ENCODE measurements at regions of chr12 and their contacts with region 1.

Region 1: GRCh38 chr12:18250313-18250916 is 10.9 kb upstream of the PIK3C2G start:
- DNase-seq: peak; percentile 79
- H3K4me3 ChIP-seq: no peak overlapping the region
- H3K27ac ChIP-seq: no peak overlapping the region
- H3K4me1 ChIP-seq: peaks cover 2% of the 10 kb centered on the region
- H3K27me3 ChIP-seq: no peaks in the 10 kb centered on the region
- CTCF ChIP-seq: peak; percentile 79

Region 2: GRCh38 chr12:18320036-18320617 is 69.7 kb after region 1 on chr12:
- CTCF ChIA-PET with region 1: no interaction called
- POLR2A ChIA-PET with region 1: no interaction called
- intact Hi-C with region 1: loop called (anchors 2 kb)
- DNase-seq: peak; percentile 78
- H3K4me3 ChIP-seq: no peak overlapping the region
- H3K27ac ChIP-seq: no peak overlapping the region
- H3K4me1 ChIP-seq: no peaks in the 10 kb centered on the region
- H3K27me3 ChIP-seq: no peaks in the 10 kb centered on the region
- CTCF ChIP-seq: peak; percentile 67

Region 3: DNA sequence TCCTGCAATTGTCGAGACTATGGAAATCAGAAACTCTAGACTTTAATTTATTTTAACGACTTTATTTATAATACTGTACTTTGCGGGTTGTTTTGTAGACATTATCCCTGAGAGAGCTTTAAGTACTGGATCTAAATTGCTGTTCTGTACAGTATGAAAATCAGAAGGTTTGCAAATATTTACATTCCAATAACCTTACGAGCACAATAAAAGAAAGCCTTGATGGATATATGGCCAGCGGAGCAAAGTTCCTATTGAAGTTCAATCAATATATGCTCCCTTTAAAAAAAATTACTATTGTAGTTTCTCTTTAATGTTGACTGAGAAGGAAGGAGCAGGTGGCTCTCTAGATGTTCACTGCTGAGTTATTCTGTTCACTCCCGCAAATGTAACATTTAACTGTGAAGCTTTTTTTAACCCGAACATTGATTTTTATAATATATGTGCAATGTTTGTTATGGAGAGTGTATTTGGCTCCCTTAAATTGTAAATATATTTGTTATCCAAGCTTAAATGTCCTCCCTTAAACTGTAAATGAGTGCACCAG is 252.1 kb after region 1 on chr12:
- CTCF ChIA-PET with region 1: no interaction called
- POLR2A ChIA-PET with region 1: no interaction called
- intact Hi-C with region 1: no loop called
- DNase-seq: no peak
- H3K4me3 ChIP-seq: no peak overlapping the region
- H3K27ac ChIP-seq: no peak overlapping the region
- H3K4me1 ChIP-seq: no peaks in the 10 kb centered on the region
- H3K27me3 ChIP-seq: no peaks in the 10 kb centered on the region
- CTCF ChIP-seq: no peak

Measured in A673 (cell line).